ENCODE measurements at regions of chr14 and their contacts with region 1.

Region 1: GRCh38 chr14:58107947-58108552 is 44.0 kb downstream of the ARMH4 start:
- DNase-seq: peak in 7 of 9 donors; percentile 23 to 55 (median 29)
- ATAC-seq: peak; percentile 45
- H3K4me3 ChIP-seq: no peak overlapping the region
- H3K4me3 Mint-ChIP-seq: no peak overlapping the region
- H3K27ac ChIP-seq: no peak overlapping the region
- H3K27ac Mint-ChIP-seq: no peak overlapping the region
- H3K4me1 ChIP-seq: no peaks in the 10 kb centered on the region
- H3K4me1 Mint-ChIP-seq: no peaks in the 10 kb centered on the region
- H3K27me3 ChIP-seq: peaks cover 0 to 2% of the 10 kb centered on the region in 2 donors
- H3K27me3 Mint-ChIP-seq: peaks cover 4 to 44% (median 15%) of the 10 kb centered on the region in 5 donors

Region 2: DNA sequence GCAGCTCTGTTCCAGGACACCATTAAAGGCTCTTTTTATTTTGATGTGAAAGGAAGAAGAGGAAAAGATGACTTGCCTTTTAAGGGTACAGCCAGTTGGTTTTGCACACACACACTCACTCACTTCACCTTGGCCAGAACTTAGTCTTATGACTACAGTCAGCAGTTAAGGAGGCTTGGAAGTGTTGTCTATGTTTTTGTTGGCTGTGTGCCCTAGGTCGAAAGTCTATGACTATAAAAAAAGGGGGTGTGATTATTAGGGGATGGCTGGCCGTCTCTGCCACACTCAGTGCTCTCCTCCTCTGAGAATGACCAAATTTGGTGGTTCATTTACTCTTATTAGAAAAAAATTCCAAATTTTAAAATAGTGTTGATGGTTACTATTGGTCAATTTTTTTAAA is 1158.2 kb before region 1 on chr14:
- CTCF ChIA-PET with region 1: no interaction called
- POLR2A ChIA-PET with region 1: no interaction called
- intact Hi-C with region 1: no loop called
- DNase-seq: no peak
- ATAC-seq: no peak
- H3K4me3 ChIP-seq: no peak overlapping the region
- H3K4me3 Mint-ChIP-seq: no peak overlapping the region
- H3K27ac ChIP-seq: no peak overlapping the region
- H3K27ac Mint-ChIP-seq: no peak overlapping the region
- H3K4me1 ChIP-seq: no peaks in the 10 kb centered on the region
- H3K4me1 Mint-ChIP-seq: no peaks in the 10 kb centered on the region
- H3K27me3 ChIP-seq: peaks cover 0 to 4% of the 10 kb centered on the region in 2 donors
- H3K27me3 Mint-ChIP-seq: peaks cover 0 to 34% (median 27%) of the 10 kb centered on the region in 5 donors

Region 3: DNA sequence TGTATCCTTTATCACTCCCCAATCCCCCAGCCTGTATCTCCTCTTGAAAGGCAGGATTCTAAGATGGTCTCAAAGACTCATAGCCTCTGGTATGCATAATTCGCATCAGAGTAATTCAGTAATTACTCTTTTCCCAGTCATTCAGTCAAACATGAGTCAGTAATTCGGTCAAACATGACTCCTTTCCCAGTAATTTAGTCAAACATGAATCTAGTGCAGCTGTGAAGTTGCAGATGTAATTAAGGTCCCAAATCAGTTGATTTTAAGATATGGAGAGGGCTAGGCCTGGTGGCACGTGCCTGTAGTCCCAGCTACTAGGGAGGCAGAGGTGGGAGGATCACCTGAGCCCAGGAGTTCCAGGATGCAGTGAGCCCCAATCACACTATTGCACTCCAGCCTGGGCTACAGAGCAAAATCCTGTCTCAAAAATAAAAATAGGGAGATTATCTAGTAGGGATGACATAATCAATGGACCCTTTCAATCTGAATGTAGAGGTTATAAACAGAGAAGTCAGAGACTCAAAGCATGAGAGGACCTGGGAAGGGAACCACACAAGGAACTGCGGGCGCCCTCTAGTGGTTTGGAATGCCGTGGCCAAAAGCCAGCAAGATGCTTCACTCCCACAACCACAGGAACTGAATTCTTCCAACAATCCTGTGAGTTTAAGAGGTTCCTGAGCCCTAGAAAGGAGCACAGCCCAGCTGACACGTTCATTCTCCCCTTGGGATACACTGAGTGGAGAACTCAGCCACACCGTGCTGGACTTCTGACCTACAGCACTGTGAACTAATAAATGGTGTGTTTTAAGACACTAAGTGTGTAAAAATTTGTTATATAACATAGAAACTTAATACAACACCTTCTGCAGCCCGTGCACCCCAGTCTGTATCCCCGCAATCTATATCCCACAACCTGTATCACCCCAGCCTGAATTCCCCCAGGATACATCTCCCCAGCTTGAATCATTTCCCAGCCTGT is 58.2 kb after region 1 on chr14:
- CTCF ChIA-PET with region 1: interaction called, 4 read pairs
- POLR2A ChIA-PET with region 1: no interaction called
- intact Hi-C with region 1: loop called (anchors 1 kb)
- DNase-seq: peak; percentile 18 to 70 (median 53)
- ATAC-seq: peak; percentile 73
- H3K4me3 ChIP-seq: no peak overlapping the region
- H3K4me3 Mint-ChIP-seq: no peak overlapping the region
- H3K27ac ChIP-seq: no peak overlapping the region
- H3K27ac Mint-ChIP-seq: no peak overlapping the region
- H3K4me1 ChIP-seq: no peaks in the 10 kb centered on the region
- H3K4me1 Mint-ChIP-seq: peaks cover 0 to 4% (median 0%) of the 10 kb centered on the region in 7 donors
- H3K27me3 ChIP-seq: no peaks in the 10 kb centered on the region
- H3K27me3 Mint-ChIP-seq: peaks cover 11 to 30% (median 15%) of the 10 kb centered on the region in 5 donors

Region 4: DNA sequence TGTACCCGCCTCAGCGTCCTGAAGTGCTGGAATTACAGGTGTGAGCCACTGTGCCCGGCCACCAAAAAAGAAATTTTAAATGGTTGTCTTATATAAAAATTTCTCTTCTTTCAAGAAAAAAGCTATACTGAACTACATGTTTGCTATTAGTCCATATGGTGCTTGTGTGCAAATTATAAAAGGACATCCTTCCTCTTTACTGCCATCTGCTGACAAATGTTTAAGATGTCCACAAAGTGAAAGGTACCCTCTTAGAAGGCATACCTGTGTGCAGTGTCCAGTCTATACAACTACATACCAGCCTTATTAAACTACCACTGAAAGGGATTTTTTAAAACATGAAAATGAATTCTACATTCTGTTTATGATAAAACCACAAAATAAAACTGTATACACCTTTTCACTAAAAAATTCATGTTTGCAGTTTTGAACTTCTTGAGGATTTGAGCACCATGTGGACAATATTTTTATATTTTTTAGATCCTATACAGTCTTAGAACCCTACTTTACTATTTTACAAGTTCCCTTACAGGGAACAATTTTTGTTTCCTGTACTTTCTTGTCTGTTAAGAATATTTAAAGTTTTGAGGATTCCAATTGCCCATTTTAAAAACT is 254.9 kb after region 1 on chr14:
- CTCF ChIA-PET with region 1: no interaction called
- POLR2A ChIA-PET with region 1: no interaction called
- intact Hi-C with region 1: loop called (anchors 1 to 2 kb)
- DNase-seq: peak in 6 of 9 donors; percentile 2 to 55 (median 34)
- ATAC-seq: peak; percentile 63
- H3K4me3 ChIP-seq: no peak overlapping the region
- H3K4me3 Mint-ChIP-seq: no peak overlapping the region
- H3K27ac ChIP-seq: no peak overlapping the region
- H3K27ac Mint-ChIP-seq: no peak overlapping the region
- H3K4me1 ChIP-seq: no peaks in the 10 kb centered on the region
- H3K4me1 Mint-ChIP-seq: peaks cover 0 to 6% (median 0%) of the 10 kb centered on the region in 7 donors
- H3K27me3 ChIP-seq: no peaks in the 10 kb centered on the region
- H3K27me3 Mint-ChIP-seq: no peaks in the 10 kb centered on the region

Region 5: DNA sequence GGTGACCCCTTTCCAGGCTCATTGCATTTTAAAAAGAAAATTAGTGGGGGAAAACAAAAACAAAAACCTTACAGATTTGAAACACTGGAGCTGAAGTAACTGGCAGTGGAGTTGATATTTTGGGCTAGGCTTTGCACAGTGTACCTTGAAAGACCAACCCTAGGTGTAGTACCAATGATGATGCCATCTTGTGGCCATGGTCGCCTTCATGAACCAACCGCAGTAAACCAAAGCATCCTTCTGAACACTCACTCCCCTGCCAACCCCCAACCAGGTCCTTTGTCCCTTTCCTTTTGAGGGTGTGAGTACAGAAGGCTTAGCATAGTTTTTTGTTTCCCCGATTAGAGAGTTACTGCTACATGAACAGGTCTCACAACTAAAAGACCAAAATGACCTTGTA is 293.5 kb after region 1 on chr14:
- CTCF ChIA-PET with region 1: interaction called, 3 read pairs
- POLR2A ChIA-PET with region 1: no interaction called
- intact Hi-C with region 1: loop called (anchors 1 to 2 kb)
- DNase-seq: peak in 1 of 9 donors; percentile 5
- ATAC-seq: no peak
- H3K4me3 ChIP-seq: no peak overlapping the region
- H3K4me3 Mint-ChIP-seq: no peak overlapping the region
- H3K27ac ChIP-seq: no peak overlapping the region
- H3K27ac Mint-ChIP-seq: no peak overlapping the region
- H3K4me1 ChIP-seq: peaks cover 0 to under 1% of the 10 kb centered on the region in 2 donors
- H3K4me1 Mint-ChIP-seq: peaks cover 0 to 8% (median 4%) of the 10 kb centered on the region in 7 donors
- H3K27me3 ChIP-seq: no peaks in the 10 kb centered on the region
- H3K27me3 Mint-ChIP-seq: no peaks in the 10 kb centered on the region

Region 6: DNA sequence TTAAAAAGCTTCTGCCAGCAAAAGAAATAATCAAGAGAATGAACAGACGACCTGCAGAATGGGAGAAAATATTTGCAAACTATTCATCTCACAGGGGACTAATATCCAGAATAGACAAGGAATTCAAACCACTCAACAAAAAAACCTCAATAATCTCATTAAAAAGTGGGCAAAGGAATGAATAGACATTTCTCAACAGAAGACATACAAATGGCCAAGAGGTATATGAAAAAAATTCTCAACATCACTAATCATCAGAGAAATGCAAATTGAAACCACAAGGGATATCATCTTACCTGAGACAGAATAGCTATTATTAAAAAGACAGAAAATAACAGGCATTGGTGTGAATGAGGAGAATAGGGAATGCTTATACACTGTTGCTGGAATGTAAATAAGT is 799.8 kb after region 1 on chr14:
- CTCF ChIA-PET with region 1: no interaction called
- POLR2A ChIA-PET with region 1: no interaction called
- intact Hi-C with region 1: no loop called
- DNase-seq: no peak
- ATAC-seq: no peak
- H3K4me3 ChIP-seq: no peak overlapping the region
- H3K4me3 Mint-ChIP-seq: no peak overlapping the region
- H3K27ac ChIP-seq: no peak overlapping the region
- H3K27ac Mint-ChIP-seq: no peak overlapping the region
- H3K4me1 ChIP-seq: no peaks in the 10 kb centered on the region
- H3K4me1 Mint-ChIP-seq: no peaks in the 10 kb centered on the region
- H3K27me3 ChIP-seq: no peaks in the 10 kb centered on the region
- H3K27me3 Mint-ChIP-seq: peaks cover 0 to 7% (median 0%) of the 10 kb centered on the region in 5 donors

Region 7: GRCh38 chr14:59454131-59454530 is 1346.1 kb after region 1 on chr14:
- CTCF ChIA-PET with region 1: no interaction called
- POLR2A ChIA-PET with region 1: no interaction called
- intact Hi-C with region 1: loop called in 1 of 2 experiments (anchors 10 kb)
- DNase-seq: no peak
- ATAC-seq: no peak
- H3K4me3 ChIP-seq: no peak overlapping the region
- H3K4me3 Mint-ChIP-seq: no peak overlapping the region
- H3K27ac ChIP-seq: no peak overlapping the region
- H3K27ac Mint-ChIP-seq: no peak overlapping the region
- H3K4me1 ChIP-seq: no peaks in the 10 kb centered on the region
- H3K4me1 Mint-ChIP-seq: no peaks in the 10 kb centered on the region
- H3K27me3 ChIP-seq: no peaks in the 10 kb centered on the region
- H3K27me3 Mint-ChIP-seq: peaks cover 0 to 2% (median under 1%) of the 10 kb centered on the region in 5 donors

Measured in naive thymus-derived CD4-positive, alpha-beta T cell (primary cell).